Left cardiac atrium (tissue), 4 donors: ENCODE measurements at regions of chr7 and their contacts with region 1.

Region 1: DNA sequence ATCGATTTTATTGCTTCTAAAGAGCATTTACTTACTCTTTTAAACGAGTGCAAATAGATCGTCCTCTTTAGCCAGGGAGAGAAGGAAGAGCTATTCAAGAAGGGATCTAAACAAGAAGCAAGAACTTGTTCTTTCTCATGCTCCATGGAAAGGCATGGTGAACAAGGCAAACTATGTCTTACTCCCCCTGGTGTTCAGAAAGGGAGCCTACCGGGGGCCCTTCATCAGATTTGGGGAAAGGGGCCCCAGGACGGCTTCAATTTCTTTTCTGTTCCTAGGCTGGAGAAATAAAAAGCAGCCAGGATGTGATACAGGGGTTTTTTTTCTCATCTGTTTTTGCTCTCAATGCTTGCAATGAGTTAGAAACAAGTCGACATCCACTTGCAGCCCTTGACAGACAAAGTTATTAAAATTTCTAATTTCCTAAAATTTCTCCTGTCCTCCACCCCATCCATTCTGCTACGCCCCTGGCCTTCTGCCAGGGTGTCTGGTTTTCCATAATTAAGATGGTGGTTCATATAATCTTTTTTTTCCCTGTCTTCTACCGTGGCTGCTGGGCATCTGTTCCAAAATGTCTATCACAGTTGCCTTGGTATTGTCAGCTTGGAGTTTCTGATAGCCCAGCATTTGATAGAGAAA is 214.4 kb downstream of the CREB5 start:
- DNase-seq: peak; percentile 24
- ATAC-seq: peak in 1 of 2 donors; percentile 23

Region 2: GRCh38 chr7:27994639-27995038 is 632.1 kb before region 1 on chr7:
- intact Hi-C with region 1: no loop called
- DNase-seq: no peak
- ATAC-seq: peak in 1 of 2 donors; percentile 53

Region 3: GRCh38 chr7:28052933-28053332 is 573.8 kb before region 1 on chr7:
- intact Hi-C with region 1: no loop called
- DNase-seq: no peak
- ATAC-seq: peak in 1 of 2 donors; percentile 34

Region 4: DNA sequence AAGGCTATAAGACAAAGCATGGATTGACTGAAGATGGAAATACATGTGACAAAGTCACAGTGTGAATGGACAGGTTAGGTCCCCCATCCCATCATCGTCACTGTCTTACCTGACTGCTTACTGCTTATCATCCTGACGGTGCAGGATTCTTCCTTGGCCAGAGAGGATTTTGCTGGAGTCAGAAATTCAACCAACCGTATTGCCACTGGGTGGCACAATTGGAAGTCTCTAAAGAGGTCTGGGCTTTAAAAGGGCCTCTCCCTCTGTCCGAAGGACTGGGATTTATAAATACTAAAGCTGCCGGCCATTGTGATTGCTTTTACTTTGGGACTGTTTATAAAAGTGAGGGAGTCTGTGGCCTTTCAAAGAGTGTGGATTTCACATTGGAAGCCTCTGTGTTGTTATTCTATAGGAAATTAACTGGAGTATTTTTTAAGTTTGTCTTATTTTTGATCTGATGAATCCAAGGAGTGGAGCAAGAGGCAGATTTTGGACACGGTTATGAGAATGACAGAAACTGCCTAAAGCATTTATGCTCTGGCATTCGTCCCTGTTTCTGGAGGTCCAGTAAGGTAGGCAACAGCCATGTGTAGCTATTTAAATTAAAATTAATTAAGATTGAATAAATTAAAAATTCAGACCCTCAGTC is 327.7 kb before region 1 on chr7:
- intact Hi-C with region 1: loop called (anchors 5 kb)
- DNase-seq: no peak
- ATAC-seq: peak; percentile 65 to 84

Region 5: DNA sequence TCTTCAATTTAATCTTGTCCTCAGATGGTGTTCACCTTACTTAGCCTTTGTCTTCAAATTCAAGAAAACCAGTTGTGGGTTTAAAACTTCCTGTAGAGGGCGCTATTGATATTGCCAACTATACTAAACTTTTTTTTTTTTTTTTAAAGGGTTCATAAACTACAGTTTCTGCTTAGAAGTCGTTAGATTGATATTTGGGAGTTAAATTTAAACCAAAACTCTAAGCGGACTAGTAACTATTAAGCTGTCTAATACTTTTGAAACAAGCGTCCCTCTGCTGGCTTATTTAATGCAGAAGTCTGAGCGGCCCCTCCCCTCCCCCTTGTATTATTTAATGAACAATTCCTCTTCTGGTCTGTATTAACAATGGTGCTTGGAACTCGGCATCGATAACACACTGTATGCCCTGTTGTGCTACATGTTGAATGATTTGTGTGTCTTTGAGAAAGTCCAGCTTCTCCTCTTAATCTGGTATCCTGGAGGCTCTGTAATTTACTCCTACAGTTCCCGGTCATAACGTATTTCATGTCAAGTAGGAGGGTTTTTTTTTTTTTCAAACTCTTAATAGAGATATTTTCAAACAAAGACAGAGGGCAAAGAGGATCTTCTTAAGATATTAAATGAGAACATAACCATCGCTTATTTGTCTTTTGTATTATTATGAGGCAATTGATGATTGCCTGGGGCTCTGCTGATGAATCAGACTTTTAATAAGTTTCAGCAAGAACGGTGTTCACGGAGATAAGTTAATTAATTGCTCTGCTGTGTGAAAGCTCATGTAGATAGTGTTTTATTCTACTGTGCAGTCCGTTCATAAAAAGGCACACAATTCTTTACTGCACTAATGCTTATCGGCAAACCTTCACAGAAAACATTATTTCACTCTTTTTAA is 237.0 kb before region 1 on chr7:
- intact Hi-C with region 1: loop called (anchors 2 to 10 kb)
- DNase-seq: no peak
- ATAC-seq: peak; percentile 19 to 45

Region 6: GRCh38 chr7:28408960-28409715 is 217.6 kb before region 1 on chr7:
- intact Hi-C with region 1: loop called in 1 of 2 experiments (anchors 2 kb)
- DNase-seq: peak; percentile 97
- ATAC-seq: peak; percentile 89

Region 7: DNA sequence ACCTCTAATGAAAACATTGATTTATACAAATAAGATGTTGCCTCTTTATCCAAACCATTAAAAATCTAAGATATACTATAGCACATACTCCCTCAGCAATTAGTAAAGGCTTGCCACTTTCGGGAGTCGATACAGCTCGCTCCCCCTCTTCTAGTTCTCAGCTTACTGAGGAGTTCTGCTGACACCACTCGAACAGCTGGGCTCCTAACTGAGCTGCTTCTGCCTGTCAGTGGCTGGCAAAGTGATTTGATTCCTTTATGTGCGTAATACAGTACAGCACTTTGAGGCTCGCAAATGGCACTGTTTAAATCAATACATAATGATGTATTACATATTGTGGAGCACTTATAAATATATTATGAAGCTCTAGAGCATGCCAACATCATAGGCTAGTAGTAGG is 27.4 kb after region 1 on chr7:
- intact Hi-C with region 1: no loop called
- DNase-seq: no peak
- ATAC-seq: no peak

Region 8: GRCh38 chr7:28853834-28854749 is 227.3 kb after region 1 on chr7:
- intact Hi-C with region 1: loop called in 1 of 2 experiments (anchors 10 kb)
- DNase-seq: peak; percentile 81
- ATAC-seq: peak; percentile 97 to 98